ENCODE measurements at regions of chr2 and their contacts with region 1.

Region 1: GRCh38 chr2:176454893-176455811 is 185.9 kb downstream of the MTX2 start:
- DNase-seq: peak; percentile 42 to 59
- ATAC-seq: peak; percentile 10 to 72
- H3K4me3 ChIP-seq: no peak overlapping the region
- H3K27ac ChIP-seq: peak overlapping the region; percentile 24 to 59 (median 45)
- H3K4me1 ChIP-seq: peaks cover 0 to 5% of the 10 kb centered on the region in 2 donors
- H3K27me3 ChIP-seq: no peaks in the 10 kb centered on the region
- CTCF ChIP-seq: peak; percentile 66 to 95 (median 82)
- POLR2A ChIP-seq: no peak

Region 2: DNA sequence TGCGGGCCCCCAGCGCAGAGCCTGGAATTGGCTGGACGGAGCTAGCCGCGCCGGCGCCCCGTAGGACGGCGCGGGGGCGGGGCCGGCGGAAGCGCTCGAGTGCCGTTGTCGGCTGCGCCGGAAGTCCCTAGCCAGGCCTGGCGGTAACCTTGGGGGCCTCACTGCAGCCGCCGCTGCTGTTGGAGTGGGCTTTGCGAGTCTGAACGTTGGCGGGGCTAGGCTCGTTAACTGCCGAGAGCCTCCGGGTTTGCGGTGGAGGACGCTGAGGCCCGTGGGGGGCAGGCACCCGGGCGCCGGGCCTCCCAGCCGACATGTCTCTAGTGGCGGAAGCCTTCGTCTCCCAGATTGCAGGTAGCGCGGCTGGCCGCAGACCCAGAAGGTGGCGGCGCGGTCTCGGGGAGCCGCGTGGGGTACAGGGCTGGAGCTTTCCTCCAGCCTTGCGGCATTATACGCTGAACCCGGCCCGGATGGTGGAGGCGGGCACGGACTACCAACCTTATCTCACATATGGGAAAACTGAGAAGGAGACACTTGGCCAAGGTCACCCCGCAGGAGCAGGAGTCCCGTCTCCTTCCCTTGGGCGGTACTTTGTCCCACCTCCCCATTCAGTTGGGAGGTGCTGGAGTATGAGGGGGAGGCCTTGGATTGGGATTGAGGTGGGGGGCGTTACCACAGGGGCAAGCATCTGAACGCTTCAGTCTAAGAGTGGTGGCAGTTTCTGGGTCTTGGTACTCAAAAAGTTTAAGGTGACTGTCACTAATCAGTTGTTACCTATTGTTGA is 185.6 kb before region 1 on chr2 and contains the start of gene MTX2:
- in situ Hi-C with region 1: no loop called
- intact Hi-C with region 1: loop called (anchors 10 kb)
- DNase-seq: peak; percentile 48 to 61
- ATAC-seq: peak; percentile 93 to 95
- H3K4me3 ChIP-seq: peak within 1 kb of the TSS; percentile 84 to 94 (median 89)
- H3K27ac ChIP-seq: peak within 1 kb of the TSS; percentile 85 to 92 (median 89)
- H3K4me1 ChIP-seq: peaks cover 13 to 29% of the 10 kb centered on the region in 2 donors
- H3K27me3 ChIP-seq: no peaks in the 10 kb centered on the region
- CTCF ChIP-seq: peak in 3 of 5 experiments; percentile 19 to 46 (median 29)
- POLR2A ChIP-seq: peak; percentile 59 to 61
- total RNA-seq, gene MTX2: 35.8 to 43.3 (median 39.1) TPM

Region 3: DNA sequence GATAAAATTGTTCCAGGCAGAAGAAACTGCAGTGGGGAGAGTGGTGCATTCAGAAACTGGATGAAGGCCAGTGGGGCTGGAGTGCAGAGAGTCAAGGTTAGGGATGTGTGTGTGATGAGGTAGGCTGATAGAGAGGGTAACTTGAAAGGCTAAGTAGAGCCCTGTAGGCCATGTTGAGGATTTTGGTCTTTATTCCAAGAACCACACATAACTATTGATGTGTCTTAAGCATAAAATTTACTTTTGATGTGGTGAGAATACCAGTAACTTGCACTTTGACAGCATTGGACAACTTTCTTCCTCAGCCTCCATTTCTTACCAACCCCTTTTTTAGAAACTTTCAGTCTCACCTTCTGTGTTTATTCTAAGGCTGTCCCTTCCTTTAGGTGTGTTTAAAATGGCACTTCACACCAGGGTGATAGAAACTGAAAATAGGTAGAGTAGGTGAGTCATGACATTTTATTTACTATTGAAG is 163.3 kb before region 1 on chr2:
- in situ Hi-C with region 1: no loop called
- intact Hi-C with region 1: no loop called
- DNase-seq: no peak
- ATAC-seq: no peak
- H3K4me3 ChIP-seq: no peak overlapping the region
- H3K27ac ChIP-seq: no peak overlapping the region
- H3K4me1 ChIP-seq: peaks cover 41 to 43% of the 10 kb centered on the region in 2 donors
- H3K27me3 ChIP-seq: no peaks in the 10 kb centered on the region
- CTCF ChIP-seq: no peak
- POLR2A ChIP-seq: no peak

Region 4: DNA sequence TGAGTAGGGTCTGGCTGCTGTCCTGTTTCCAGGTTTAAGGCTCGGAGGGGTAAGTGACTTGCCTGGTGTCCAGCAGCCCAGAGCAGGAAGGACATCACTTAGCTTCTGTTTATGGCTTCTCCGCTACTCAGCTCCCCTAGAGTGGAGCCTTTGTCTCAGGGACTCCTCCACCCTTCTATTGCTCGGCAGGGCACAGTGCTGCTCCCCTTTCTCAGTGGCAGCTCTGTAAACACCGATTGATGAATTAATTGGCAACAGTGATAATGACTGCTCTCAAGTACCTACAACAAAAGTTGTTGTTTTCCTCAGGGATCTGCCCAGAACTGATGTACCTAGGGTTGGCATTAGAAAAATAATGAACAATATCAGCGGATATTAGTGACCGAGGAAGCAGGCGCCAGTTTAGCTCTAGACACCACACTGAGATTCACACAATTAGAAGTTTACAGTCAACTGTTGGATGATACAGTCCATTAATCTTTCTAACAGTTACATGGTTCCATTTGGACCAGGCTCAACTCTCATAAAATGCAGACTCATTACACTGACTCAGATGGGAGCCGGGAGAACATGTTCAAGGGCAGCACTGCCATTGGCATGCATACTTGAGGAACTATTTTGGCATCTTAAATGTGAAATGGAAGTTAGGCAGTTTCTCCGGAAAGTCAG is 79.8 kb after region 1 on chr2:
- in situ Hi-C with region 1: no loop called
- intact Hi-C with region 1: no loop called
- DNase-seq: no peak
- ATAC-seq: peak in 1 of 2 donors; percentile 76
- H3K4me3 ChIP-seq: no peak overlapping the region
- H3K27ac ChIP-seq: no peak overlapping the region
- H3K4me1 ChIP-seq: peaks cover 2 to 5% of the 10 kb centered on the region in 2 donors
- H3K27me3 ChIP-seq: no peaks in the 10 kb centered on the region
- CTCF ChIP-seq: no peak
- POLR2A ChIP-seq: no peak

Measured in gastrocnemius medialis (tissue), 4 donors.